ENCODE measurements at regions of chr21 and their contacts with region 1.

Region 1: DNA sequence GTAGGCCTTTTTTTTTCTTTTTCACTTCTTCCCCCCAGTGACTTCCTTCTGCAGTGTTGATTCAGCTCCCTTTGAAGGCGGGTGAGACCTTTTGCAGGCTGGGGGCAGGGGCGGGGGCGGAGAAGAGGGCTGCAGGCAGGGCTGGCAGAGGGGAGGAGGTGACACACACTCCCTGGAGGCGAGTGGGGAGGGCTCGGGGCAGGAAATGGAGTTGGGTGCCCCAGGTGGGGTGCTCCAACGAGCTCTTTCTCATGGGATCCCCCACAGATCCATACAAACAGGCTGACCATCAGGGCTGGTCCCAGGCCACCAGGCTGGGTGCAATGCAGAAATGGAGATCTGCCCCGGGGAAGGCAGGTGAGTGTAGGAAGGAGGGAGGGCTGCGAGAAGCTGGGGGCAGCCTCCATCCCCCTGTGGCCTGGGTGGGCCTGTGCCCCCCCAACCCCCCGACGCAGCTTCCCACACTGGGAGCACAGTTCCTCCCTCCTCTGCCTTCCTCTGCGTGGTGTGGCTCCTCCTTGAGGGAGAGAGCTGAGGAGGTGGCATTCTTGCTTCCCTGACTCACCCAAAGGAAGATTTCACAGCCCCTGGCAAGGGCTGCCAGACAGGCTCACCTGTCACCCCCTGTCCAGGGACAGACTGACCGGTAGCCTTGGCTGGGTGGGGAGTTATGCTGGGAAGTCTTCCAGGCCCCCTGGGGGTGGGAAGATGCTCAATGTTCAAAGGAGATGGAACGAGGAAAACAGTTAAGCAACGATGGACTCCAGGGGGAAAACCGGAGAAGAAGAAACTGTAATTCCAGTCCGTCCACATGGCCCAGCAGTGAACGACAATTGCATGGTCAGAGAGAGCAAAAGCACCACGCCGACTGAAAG is 7.1 kb upstream of the ITGB2 start:
- DNase-seq: peak; percentile 71
- ATAC-seq: peak; percentile 79 to 83
- H3K4me3 ChIP-seq: peak overlapping the region; percentile 35
- H3K27ac ChIP-seq: peak overlapping the region; percentile 96 to 98
- H3K4me1 ChIP-seq: peaks cover 45% of the 10 kb centered on the region
- CTCF ChIP-seq: no peak
- EP300 ChIP-seq: 0 out of 5 replicates have a peak, but pooled peaks of 1 of the 2 experiments have one; percentile 39
- POLR2A ChIP-seq: no peak
- RAD21 ChIP-seq: 0 out of 5 replicates have a peak, but pooled peaks of 1 of the 2 experiments have one; percentile 7

Region 2: GRCh38 chr21:44801468-44802395 is 126.1 kb before region 1 on chr21 and contains the start of gene UBE2G2:
- CTCF ChIA-PET with region 1: interaction called, 23 read pairs
- POLR2A ChIA-PET with region 1: interaction called, 4 read pairs
- DNase-seq: peak; percentile 72 to 75
- ATAC-seq: peak; percentile 94 to 96
- H3K4me3 ChIP-seq: peak within 1 kb of the TSS; percentile 91
- H3K27ac ChIP-seq: peak within 1 kb of the TSS; percentile 86 to 98
- H3K4me1 ChIP-seq: peaks cover 17% of the 10 kb centered on the region; the same call in 2 of the 3 replicates
- CTCF ChIP-seq: no peak
- EP300 ChIP-seq: no peak
- POLR2A ChIP-seq: no peak; the same call in 1 of the 2 replicates
- RAD21 ChIP-seq: no peak
- polyA plus RNA-seq, gene UBE2G2: 65.8 and 68.2 TPM in 2 replicates

Region 3: GRCh38 chr21:44849616-44850130 is 78.2 kb before region 1 on chr21:
- CTCF ChIA-PET with region 1: interaction called, 14 read pairs
- POLR2A ChIA-PET with region 1: no interaction called
- DNase-seq: no peak
- ATAC-seq: no peak
- H3K4me3 ChIP-seq: no peak overlapping the region
- H3K27ac ChIP-seq: no peak overlapping the region
- H3K4me1 ChIP-seq: peaks cover 12% of the 10 kb centered on the region
- CTCF ChIP-seq: no peak
- EP300 ChIP-seq: no peak
- POLR2A ChIP-seq: no peak
- RAD21 ChIP-seq: no peak

Region 4: DNA sequence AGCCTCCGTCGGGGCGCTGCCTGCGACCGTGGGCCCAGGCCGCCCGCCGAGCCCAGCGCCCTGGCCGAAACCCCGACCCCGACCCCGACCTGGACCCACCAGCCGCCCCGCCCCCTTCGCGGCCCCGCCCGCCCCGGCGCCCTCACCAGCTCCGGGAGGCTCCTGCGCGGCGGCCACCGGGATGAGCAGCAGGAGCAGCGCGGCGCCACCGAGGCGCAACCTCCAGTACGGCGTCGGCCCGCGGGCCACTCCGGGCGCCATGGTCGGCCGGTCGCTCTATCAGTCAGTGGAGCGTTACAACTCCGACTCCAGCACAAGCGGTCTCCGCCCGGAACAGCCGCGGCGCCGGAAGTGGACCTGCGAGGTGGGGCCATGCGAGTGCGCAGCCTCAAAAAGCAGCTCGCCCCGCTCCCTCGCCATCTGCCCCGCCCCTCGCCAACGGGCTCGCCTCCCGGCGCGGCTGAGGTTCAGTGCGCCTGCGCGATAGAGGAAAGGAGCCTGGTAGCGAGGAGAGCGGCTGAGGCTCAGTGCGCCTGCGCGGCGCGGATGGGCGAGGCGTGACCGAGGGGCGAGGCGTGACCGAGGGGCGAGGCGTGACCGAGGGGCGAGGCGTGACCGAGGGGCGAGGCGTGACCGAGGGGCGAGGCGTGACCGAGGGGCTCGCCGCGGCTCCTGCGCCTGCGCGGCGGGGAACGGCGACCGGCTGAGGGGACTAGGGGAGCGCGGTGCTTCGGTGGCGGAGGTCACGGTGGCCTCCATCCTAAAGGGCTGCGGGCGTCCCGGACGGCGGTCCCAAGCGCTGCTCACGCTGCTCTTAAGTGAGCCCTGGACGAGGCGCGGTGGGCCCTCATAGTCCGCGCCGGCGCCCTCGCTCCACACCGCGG is 54.2 kb before region 1 on chr21 and contains the start of gene PTTG1IP:
- CTCF ChIA-PET with region 1: interaction called, 7 read pairs
- POLR2A ChIA-PET with region 1: interaction called, 28 read pairs
- DNase-seq: peak; percentile 93 to 95
- ATAC-seq: peak; percentile 73 to 78
- H3K4me3 ChIP-seq: peak within 1 kb of the TSS; percentile 86
- H3K27ac ChIP-seq: peak within 1 kb of the TSS; percentile 92 to 97
- H3K4me1 ChIP-seq: peaks cover 52% of the 10 kb centered on the region
- CTCF ChIP-seq: no peak
- EP300 ChIP-seq: no peak
- POLR2A ChIP-seq: peak; percentile 79
- RAD21 ChIP-seq: no peak
- polyA plus RNA-seq, gene PTTG1IP: 97.6 and 99.4 TPM in 2 replicates

Region 5: GRCh38 chr21:44892536-44893277 is 35.1 kb before region 1 on chr21:
- CTCF ChIA-PET with region 1: interaction called, 50 read pairs
- POLR2A ChIA-PET with region 1: no interaction called
- DNase-seq: no peak
- ATAC-seq: peak; percentile 75 to 90
- H3K4me3 ChIP-seq: no peak overlapping the region
- H3K27ac ChIP-seq: peak overlapping the region; percentile 28 to 71; a peak in 4 of 6 replicates
- H3K4me1 ChIP-seq: no peaks in the 10 kb centered on the region
- CTCF ChIP-seq: peak; percentile 68
- EP300 ChIP-seq: no peak
- POLR2A ChIP-seq: no peak
- RAD21 ChIP-seq: peak; percentile 58 to 60

Region 6: GRCh38 chr21:44911389-44912157 is 16.3 kb before region 1 on chr21:
- CTCF ChIA-PET with region 1: interaction called, 14 read pairs
- POLR2A ChIA-PET with region 1: interaction called, 9 read pairs
- DNase-seq: peak in 1 of 2 experiments; percentile 56
- ATAC-seq: peak; percentile 71 to 91
- H3K4me3 ChIP-seq: no peak overlapping the region
- H3K27ac ChIP-seq: peak overlapping the region; percentile 73 to 87
- H3K4me1 ChIP-seq: peaks cover 39% of the 10 kb centered on the region
- CTCF ChIP-seq: peak; percentile 41
- EP300 ChIP-seq: no peak
- POLR2A ChIP-seq: no peak
- RAD21 ChIP-seq: peak; percentile 35 to 47; a peak in 4 of 5 replicates

Region 7: DNA sequence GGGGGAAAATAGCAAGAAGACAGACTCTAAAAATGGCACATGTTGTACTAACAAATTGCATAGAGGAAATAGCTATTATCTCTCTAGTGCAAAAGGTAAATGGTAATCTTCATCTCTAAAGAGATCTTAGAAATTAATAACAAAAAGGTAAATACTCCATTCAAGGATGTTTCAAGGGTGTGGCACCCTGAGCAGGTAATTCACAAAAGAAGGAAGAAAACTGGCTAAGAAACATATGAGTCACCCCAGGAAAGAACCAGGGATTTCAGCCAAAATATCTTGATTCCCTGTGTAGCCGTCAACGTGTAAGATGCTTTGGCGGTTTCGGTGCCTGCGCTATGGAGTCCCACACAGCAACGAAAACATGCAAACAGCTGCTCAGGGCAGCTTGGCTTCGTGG is 10.9 kb before region 1 on chr21:
- CTCF ChIA-PET with region 1: interaction called, 14 read pairs
- POLR2A ChIA-PET with region 1: interaction called, 3 read pairs
- DNase-seq: no peak
- ATAC-seq: no peak
- H3K4me3 ChIP-seq: no peak overlapping the region
- H3K27ac ChIP-seq: peak overlapping the region in 1 of 2 experiments; percentile 68; a peak in 2 of 6 replicates
- H3K4me1 ChIP-seq: peaks cover 35% of the 10 kb centered on the region
- CTCF ChIP-seq: no peak
- EP300 ChIP-seq: no peak
- POLR2A ChIP-seq: no peak
- RAD21 ChIP-seq: no peak

Measured in A549 (cell line).